ENCODE measurements at regions of chr6 and their contacts with region 1.

Region 1: DNA sequence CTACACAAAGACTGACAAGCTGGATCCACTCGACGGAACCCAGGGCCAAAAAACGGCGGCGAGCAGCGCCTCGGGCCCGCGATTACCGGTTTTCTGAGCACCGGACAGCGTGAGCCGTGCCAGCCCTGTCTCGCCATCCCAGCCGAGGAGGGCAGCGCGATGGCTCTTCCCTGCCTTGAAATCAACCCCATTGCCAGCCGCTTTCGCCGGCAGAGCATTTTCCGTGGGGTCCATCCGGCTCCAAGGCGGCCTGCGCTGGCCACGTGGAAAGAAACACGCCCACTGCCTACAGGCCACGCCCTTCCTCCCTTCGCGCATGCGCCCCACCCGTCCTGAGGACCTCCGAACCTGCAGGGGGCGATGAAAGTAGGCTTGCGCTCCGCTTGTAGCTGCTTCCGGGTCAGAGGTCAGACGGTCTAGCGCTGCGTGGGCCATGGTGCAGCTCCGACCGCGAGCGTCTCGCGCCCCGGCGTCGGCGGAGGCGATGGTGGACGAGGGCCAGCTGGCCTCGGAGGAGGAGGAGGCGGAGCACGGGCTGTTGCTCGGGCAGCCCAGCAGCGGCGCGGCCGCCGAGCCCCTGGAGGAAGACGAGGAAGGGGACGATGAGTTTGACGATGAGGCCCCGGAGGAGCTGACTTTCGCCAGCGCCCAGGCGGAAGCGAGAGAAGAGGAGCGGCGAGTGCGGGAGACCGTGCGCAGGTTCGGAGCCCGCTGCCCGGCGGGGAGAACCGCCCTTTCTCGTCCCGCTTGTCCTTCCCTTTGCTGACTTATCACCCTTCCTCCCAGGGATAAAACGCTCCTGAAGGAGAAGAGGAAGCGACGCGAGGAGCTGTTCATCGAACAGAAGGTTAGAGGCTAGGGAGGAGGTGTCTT is at the start of gene NOL7:
- DNase-seq: peak; percentile 99
- H3K4me3 Mint-ChIP-seq: peak within 1 kb of the TSS; percentile 93
- H3K27ac Mint-ChIP-seq: peak within 1 kb of the TSS; percentile 94
- H3K4me1 Mint-ChIP-seq: peaks cover 57% of the 10 kb centered on the region
- H3K27me3 Mint-ChIP-seq: peaks cover 5% of the 10 kb centered on the region

Region 2: GRCh38 chr6:13593720-13594119 is 21.4 kb before region 1 on chr6:
- CTCF ChIA-PET with region 1: no interaction called
- DNase-seq: no peak
- H3K4me3 Mint-ChIP-seq: no peak overlapping the region
- H3K27ac Mint-ChIP-seq: no peak overlapping the region
- H3K4me1 Mint-ChIP-seq: peaks cover 8% of the 10 kb centered on the region
- H3K27me3 Mint-ChIP-seq: no peaks in the 10 kb centered on the region

Region 3: GRCh38 chr6:13630499-13630898 is 15.3 kb after region 1 on chr6:
- CTCF ChIA-PET with region 1: interaction called, 21 read pairs
- DNase-seq: no peak
- H3K4me3 Mint-ChIP-seq: no peak overlapping the region
- H3K27ac Mint-ChIP-seq: no peak overlapping the region
- H3K4me1 Mint-ChIP-seq: peaks cover 11% of the 10 kb centered on the region
- H3K27me3 Mint-ChIP-seq: no peaks in the 10 kb centered on the region

Region 4: GRCh38 chr6:13696226-13696625 is 81.1 kb after region 1 on chr6:
- CTCF ChIA-PET with region 1: interaction called, 14 read pairs
- DNase-seq: no peak
- H3K4me3 Mint-ChIP-seq: no peak overlapping the region
- H3K27ac Mint-ChIP-seq: no peak overlapping the region
- H3K4me1 Mint-ChIP-seq: peaks cover 52% of the 10 kb centered on the region
- H3K27me3 Mint-ChIP-seq: no peaks in the 10 kb centered on the region

Region 5: DNA sequence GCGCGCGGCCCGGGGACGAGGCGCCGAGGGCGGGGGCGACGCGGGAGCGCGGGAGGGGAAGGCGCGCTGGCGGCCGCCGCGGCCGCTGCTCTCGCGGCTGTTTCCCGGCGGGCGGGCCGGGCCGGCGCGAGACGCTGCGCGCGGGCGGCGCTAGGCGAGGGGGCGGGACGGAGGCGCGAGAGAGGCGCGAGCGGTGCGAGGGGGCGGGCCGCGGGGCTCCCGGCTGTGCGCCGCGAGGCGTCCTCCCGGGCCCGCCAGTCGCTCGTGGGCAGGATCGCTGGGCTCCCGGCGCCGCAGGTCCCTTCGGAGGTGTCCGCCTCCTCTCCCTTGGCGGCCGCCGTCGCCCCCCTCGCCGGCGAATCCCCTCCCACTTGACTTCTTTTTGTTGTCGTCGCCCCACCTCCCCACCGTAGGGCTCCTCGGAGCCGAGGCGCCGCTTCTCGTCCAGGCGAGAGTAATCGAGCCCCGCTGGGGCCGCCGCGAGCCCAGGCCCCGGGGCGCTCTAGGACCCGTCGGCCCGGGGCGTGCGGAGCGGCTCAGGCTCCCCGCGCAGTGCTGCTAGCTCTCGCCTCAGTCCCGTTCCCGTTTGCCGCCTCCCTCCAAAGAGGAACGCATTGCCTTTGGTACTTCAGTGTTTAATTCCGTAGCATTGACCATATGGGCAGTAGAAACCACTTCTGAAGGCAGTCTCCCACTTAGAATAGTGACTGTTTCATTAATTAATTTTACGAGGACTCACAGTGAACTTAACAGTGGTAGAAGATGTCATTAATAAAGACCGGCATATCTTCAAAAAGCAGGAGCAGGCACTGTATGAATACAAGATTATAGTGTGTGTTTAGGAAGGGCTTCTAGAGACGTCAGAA is 96.8 kb after region 1 on chr6 and contains the start of gene RANBP9:
- CTCF ChIA-PET with region 1: interaction called, 20 read pairs
- DNase-seq: peak; percentile 91
- H3K4me3 Mint-ChIP-seq: peak within 1 kb of the TSS; percentile 93
- H3K27ac Mint-ChIP-seq: peak within 1 kb of the TSS; percentile 96
- H3K4me1 Mint-ChIP-seq: peaks cover 46% of the 10 kb centered on the region
- H3K27me3 Mint-ChIP-seq: no peaks in the 10 kb centered on the region